Psoas muscle (tissue), 8 donors: ENCODE measurements at regions of chr6 and their contacts with region 1.

Region 1: GRCh38 chr6:45746046-45746445 is 269.6 kb downstream of the CLIC5 start:
- DNase-seq: no peak
- ATAC-seq: no peak
- H3K4me3 ChIP-seq: no peak overlapping the region
- H3K27ac ChIP-seq: no peak overlapping the region
- H3K4me1 ChIP-seq: no peaks in the 10 kb centered on the region
- H3K27me3 ChIP-seq: no peaks in the 10 kb centered on the region
- CTCF ChIP-seq: no peak

Region 2: DNA sequence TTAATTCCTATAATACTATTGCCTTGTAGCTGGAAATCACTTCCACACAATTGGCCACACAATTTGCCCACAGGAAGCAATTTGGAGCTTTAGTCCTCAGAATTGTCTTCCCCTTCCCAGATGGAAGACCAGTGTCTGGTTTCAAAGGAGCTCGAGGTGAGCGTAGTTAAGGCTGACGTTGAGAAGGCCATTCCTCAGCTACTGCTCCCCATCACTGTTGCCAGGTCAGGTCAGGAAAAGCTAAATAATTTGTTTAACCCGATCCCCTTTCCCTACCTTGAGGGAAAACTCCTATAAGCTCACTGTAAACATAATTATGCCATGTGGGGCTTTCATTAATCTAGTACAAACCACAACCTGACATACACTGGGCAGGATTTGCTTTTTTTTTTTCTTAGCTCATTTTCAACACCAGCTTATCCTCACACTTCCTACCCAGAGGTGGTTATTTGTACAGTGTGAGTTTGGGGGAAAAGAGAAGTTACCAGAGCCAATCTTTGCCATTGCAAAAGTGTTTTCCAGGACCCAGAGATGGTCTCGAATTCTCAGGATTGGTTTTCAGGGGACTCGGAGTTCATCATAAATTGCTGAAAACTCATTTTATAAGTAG is 26.9 kb after region 1 on chr6:
- intact Hi-C with region 1: loop called in 1 of 2 experiments (anchors 2 kb)
- DNase-seq: no peak
- ATAC-seq: no peak
- H3K4me3 ChIP-seq: no peak overlapping the region
- H3K27ac ChIP-seq: no peak overlapping the region
- H3K4me1 ChIP-seq: no peaks in the 10 kb centered on the region
- H3K27me3 ChIP-seq: peaks cover 0 to 2% (median 0%) of the 10 kb centered on the region in 3 donors
- CTCF ChIP-seq: no peak